Activated CD4-positive, alpha-beta T cell treated with anti-CD3 and anti-CD28 coated beads for 36 hours (primary cell): ENCODE measurements at regions of chr17 and their contacts with region 1.

Region 1: GRCh38 chr17:42720996-42721583 is 23.8 kb downstream of the EZH1 start:
- DNase-seq: peak; percentile 33
- ATAC-seq: peak; percentile 90
- H3K4me3 Mint-ChIP-seq: no peak overlapping the region
- H3K27ac Mint-ChIP-seq: no peak overlapping the region
- H3K4me1 Mint-ChIP-seq: peaks cover 2% of the 10 kb centered on the region
- H3K27me3 Mint-ChIP-seq: no peaks in the 10 kb centered on the region

Region 2: DNA sequence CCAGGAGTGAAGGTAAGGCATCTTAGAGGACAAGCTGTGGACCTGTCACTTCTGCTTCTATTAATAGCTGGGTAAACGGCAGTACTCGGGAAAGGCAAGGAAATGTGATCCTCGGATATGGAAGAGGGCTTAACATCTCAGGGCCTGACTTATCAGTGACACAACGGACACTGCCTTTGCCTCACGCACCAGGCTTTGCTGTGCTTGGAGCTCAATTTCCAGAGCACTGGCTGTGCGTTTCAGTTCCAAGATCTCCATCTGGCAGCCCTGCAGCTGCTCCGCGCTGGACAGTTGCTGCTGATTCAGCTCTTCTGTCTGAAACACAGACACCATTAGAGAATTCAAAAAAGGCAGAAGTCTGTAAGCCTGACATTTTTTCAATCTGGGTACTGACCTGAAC is 1740.5 kb before region 1 on chr17:
- CTCF ChIA-PET with region 1: no interaction called
- POLR2A ChIA-PET with region 1: no interaction called
- intact Hi-C with region 1: no loop called
- DNase-seq: no peak
- ATAC-seq: no peak
- H3K4me3 Mint-ChIP-seq: no peak overlapping the region
- H3K27ac Mint-ChIP-seq: no peak overlapping the region
- H3K4me1 Mint-ChIP-seq: no peaks in the 10 kb centered on the region
- H3K27me3 Mint-ChIP-seq: peaks cover 11% of the 10 kb centered on the region

Region 3: GRCh38 chr17:42484304-42484703 is 236.8 kb before region 1 on chr17:
- CTCF ChIA-PET with region 1: no interaction called
- POLR2A ChIA-PET with region 1: no interaction called
- intact Hi-C with region 1: no loop called
- DNase-seq: peak; percentile 87
- ATAC-seq: peak; percentile 97
- H3K4me3 Mint-ChIP-seq: no peak overlapping the region
- H3K27ac Mint-ChIP-seq: no peak overlapping the region
- H3K4me1 Mint-ChIP-seq: peaks cover 27% of the 10 kb centered on the region
- H3K27me3 Mint-ChIP-seq: no peaks in the 10 kb centered on the region

Region 4: GRCh38 chr17:42760652-42761581 is 39.8 kb after region 1 on chr17 and contains the start of gene RAMP2:
- CTCF ChIA-PET with region 1: interaction called, 8 read pairs
- POLR2A ChIA-PET with region 1: no interaction called
- intact Hi-C with region 1: loop called (anchors 1 kb)
- DNase-seq: peak; percentile 44
- ATAC-seq: peak; percentile 27
- H3K4me3 Mint-ChIP-seq: no peak within 1 kb of the TSS
- H3K27ac Mint-ChIP-seq: no peak within 1 kb of the TSS
- H3K4me1 Mint-ChIP-seq: peaks cover 11% of the 10 kb centered on the region
- H3K27me3 Mint-ChIP-seq: peaks cover 48% of the 10 kb centered on the region
- total RNA-seq, gene RAMP2: not detected

Region 5: DNA sequence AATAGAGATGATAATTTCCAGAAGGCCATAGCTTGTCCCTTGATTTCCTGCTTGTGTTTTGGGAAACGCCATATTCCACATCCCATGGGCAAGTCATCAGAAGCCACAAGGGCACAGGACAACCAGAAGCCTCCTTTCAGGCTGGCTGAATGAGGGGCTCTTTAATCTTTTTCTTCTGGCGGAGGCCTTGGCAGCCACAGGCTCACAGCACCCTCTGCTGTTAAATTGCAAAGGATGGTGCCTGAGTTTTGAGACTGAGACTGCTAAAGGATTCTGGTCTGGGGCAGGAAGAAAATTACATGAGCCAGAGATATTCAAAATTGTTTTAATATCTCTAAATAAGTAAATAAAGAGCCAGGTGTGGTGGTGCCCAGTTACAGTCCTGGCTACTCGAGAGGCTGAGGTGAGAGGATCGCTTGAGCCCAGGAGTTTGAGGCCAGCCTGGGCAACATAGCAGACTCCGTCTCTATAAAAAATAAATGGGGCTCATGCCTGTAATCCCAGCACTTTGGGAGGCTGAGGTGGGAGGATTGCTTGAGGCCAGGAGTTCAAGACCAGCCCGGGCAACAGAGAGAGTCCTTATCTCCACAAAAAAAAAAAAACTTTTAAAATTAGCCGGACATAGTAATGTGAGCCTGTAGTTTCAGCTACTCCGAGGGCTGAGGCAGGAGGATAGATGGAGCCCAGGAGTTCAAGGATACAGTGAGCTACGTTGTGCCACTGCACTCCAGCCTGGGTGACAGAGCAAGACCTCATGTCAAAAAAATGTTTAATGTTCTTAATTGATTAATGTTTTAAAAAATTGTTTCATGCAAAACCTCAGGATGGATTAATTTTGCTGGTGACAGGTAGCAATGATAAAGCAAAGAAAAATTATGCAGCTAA is 216.9 kb after region 1 on chr17:
- CTCF ChIA-PET with region 1: no interaction called
- POLR2A ChIA-PET with region 1: no interaction called
- intact Hi-C with region 1: loop called in 1 of 2 experiments (anchors 1 kb)
- DNase-seq: peak; percentile 50
- ATAC-seq: no peak
- H3K4me3 Mint-ChIP-seq: no peak overlapping the region
- H3K27ac Mint-ChIP-seq: no peak overlapping the region
- H3K4me1 Mint-ChIP-seq: no peaks in the 10 kb centered on the region
- H3K27me3 Mint-ChIP-seq: peaks cover 4% of the 10 kb centered on the region

Region 6: GRCh38 chr17:43006639-43007551 is 285.8 kb after region 1 on chr17 and contains the start of gene IFI35:
- CTCF ChIA-PET with region 1: no interaction called
- POLR2A ChIA-PET with region 1: no interaction called
- intact Hi-C with region 1: no loop called
- DNase-seq: peak; percentile 94
- ATAC-seq: peak; percentile 97
- H3K4me3 Mint-ChIP-seq: peak within 1 kb of the TSS; percentile 99
- H3K27ac Mint-ChIP-seq: peak within 1 kb of the TSS; percentile 100
- H3K4me1 Mint-ChIP-seq: peaks cover 24% of the 10 kb centered on the region
- H3K27me3 Mint-ChIP-seq: no peaks in the 10 kb centered on the region
- total RNA-seq, gene IFI35: 65.3 to 68.1 TPM